PC-3 (cell line): ENCODE measurements at regions of chr6 and their contacts with region 1.

Region 1: GRCh38 chr6:82178077-82178758 is 69.3 kb downstream of the IBTK start:
- DNase-seq: peak; percentile 41
- ATAC-seq: peak; percentile 76
- H3K4me3 ChIP-seq: no peak overlapping the region
- H3K27ac ChIP-seq: no peak overlapping the region; the same call in 1 of the 2 replicates
- H3K4me1 ChIP-seq: no peaks in the 10 kb centered on the region
- H3K27me3 ChIP-seq: no peaks in the 10 kb centered on the region
- CTCF ChIP-seq: peak; percentile 55

Region 2: DNA sequence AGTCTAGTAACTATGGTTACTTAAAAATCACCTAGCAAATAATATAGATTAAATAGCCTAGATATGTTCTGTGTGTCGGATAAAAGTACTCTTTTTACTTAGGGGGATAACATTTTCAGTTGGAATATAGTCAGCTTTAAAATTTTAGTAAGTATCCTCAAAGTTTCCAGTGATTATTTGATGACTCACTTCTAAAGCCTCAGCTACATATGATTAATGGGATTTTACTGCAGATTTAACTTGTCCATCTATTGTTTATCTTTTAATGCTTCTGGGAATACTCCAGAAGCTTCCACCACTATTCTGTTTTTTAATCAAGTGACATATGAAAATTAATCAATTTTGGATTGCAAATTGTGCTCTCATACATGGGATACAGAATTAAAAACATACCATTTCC is 417.0 kb before region 1 on chr6:
- CTCF ChIA-PET with region 1: no interaction called
- POLR2A ChIA-PET with region 1: no interaction called
- intact Hi-C with region 1: loop called (anchors 1 kb)
- DNase-seq: peak; percentile 60
- ATAC-seq: peak; percentile 64
- H3K4me3 ChIP-seq: no peak overlapping the region
- H3K27ac ChIP-seq: peak overlapping the region; percentile 61
- H3K4me1 ChIP-seq: peaks cover 23% of the 10 kb centered on the region
- H3K27me3 ChIP-seq: no peaks in the 10 kb centered on the region
- CTCF ChIP-seq: no peak

Region 3: DNA sequence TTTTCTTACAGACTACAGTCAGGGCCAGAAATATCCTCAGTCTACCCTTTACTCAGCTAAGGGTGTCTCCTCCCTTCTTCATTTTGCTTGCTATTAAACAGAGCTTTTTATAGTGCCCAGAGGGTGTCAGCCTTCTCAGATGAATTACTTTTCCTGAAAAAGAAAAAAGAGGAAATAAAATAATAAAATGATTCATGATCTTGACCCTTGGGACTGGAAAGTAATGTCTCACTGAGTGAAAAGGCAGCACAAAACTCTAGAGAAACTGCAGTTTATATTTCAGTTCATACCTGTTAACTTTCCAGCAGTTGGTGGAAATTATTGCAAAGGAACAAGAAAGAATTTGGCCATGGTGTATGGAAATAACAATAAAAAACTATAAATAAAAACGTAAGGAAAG is 101.3 kb before region 1 on chr6:
- CTCF ChIA-PET with region 1: no interaction called
- POLR2A ChIA-PET with region 1: no interaction called
- intact Hi-C with region 1: loop called (anchors 5 kb)
- DNase-seq: peak; percentile 12
- ATAC-seq: peak; percentile 55
- H3K4me3 ChIP-seq: no peak overlapping the region
- H3K27ac ChIP-seq: no peak overlapping the region
- H3K4me1 ChIP-seq: peaks cover 7% of the 10 kb centered on the region; the same call in 1 of the 2 replicates
- H3K27me3 ChIP-seq: no peaks in the 10 kb centered on the region
- CTCF ChIP-seq: peak; percentile 20; the same call in 1 of the 2 replicates